ENCODE measurements at regions of chr20 and their contacts with region 1.

Region 1: GRCh38 chr20:57654363-57654997 is 34.3 kb upstream of the ZBP1 start:
- DNase-seq: peak; percentile 56
- H3K4me3 Mint-ChIP-seq: no peak overlapping the region
- H3K27ac Mint-ChIP-seq: no peak overlapping the region
- H3K4me1 Mint-ChIP-seq: peaks cover 13% of the 10 kb centered on the region
- H3K27me3 Mint-ChIP-seq: no peaks in the 10 kb centered on the region
- CTCF ChIP-seq: peak; percentile 88

Region 2: GRCh38 chr20:56664791-56665190 is 989.7 kb before region 1 on chr20:
- CTCF ChIA-PET with region 1: no interaction called
- POLR2A ChIA-PET with region 1: no interaction called
- intact Hi-C with region 1: no loop called
- DNase-seq: no peak
- H3K4me3 Mint-ChIP-seq: no peak overlapping the region
- H3K27ac Mint-ChIP-seq: no peak overlapping the region
- H3K4me1 Mint-ChIP-seq: no peaks in the 10 kb centered on the region
- H3K27me3 Mint-ChIP-seq: no peaks in the 10 kb centered on the region
- CTCF ChIP-seq: no peak

Region 3: GRCh38 chr20:57638173-57638894 is 16.1 kb before region 1 on chr20:
- CTCF ChIA-PET with region 1: interaction called, 13 read pairs
- POLR2A ChIA-PET with region 1: no interaction called
- intact Hi-C with region 1: no loop called
- DNase-seq: no peak
- H3K4me3 Mint-ChIP-seq: no peak overlapping the region
- H3K27ac Mint-ChIP-seq: no peak overlapping the region
- H3K4me1 Mint-ChIP-seq: no peaks in the 10 kb centered on the region
- H3K27me3 Mint-ChIP-seq: peaks cover 90% of the 10 kb centered on the region
- CTCF ChIP-seq: no peak

Region 4: GRCh38 chr20:57772276-57773030 is 118.0 kb after region 1 on chr20:
- CTCF ChIA-PET with region 1: interaction called, 12 read pairs
- POLR2A ChIA-PET with region 1: no interaction called
- intact Hi-C with region 1: no loop called
- DNase-seq: peak; percentile 92
- H3K4me3 Mint-ChIP-seq: no peak overlapping the region
- H3K27ac Mint-ChIP-seq: no peak overlapping the region
- H3K4me1 Mint-ChIP-seq: peaks cover 24% of the 10 kb centered on the region
- H3K27me3 Mint-ChIP-seq: no peaks in the 10 kb centered on the region
- CTCF ChIP-seq: no peak

Region 5: GRCh38 chr20:58017237-58017969 is 362.9 kb after region 1 on chr20:
- CTCF ChIA-PET with region 1: no interaction called
- POLR2A ChIA-PET with region 1: no interaction called
- intact Hi-C with region 1: no loop called
- DNase-seq: peak; percentile 37
- H3K4me3 Mint-ChIP-seq: no peak overlapping the region
- H3K27ac Mint-ChIP-seq: no peak overlapping the region
- H3K4me1 Mint-ChIP-seq: peaks cover 21% of the 10 kb centered on the region
- H3K27me3 Mint-ChIP-seq: no peaks in the 10 kb centered on the region
- CTCF ChIP-seq: no peak

Region 6: DNA sequence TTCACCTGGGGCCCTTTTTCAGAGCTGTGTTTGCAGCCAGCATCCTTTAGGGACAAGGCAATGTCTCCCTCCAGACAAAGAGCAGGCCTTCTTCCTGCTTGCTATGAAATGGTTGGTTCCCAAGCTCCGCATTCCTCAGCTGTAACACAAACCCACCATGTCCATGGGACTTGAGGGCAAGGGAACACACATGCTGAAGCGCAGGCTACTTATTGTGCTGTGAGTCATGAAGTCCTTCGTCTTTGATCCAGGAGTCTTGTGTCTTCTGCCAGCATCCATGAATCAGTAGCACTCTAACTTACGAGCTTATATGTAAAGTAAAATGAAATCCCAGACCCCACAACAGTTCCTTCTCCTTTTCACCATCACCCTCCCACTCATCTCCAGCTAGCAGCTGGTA is 515.0 kb after region 1 on chr20:
- CTCF ChIA-PET with region 1: interaction called, 10 read pairs
- POLR2A ChIA-PET with region 1: no interaction called
- intact Hi-C with region 1: no loop called
- DNase-seq: no peak
- H3K4me3 Mint-ChIP-seq: no peak overlapping the region
- H3K27ac Mint-ChIP-seq: no peak overlapping the region
- H3K4me1 Mint-ChIP-seq: no peaks in the 10 kb centered on the region
- H3K27me3 Mint-ChIP-seq: peaks cover 11% of the 10 kb centered on the region
- CTCF ChIP-seq: no peak

Region 7: GRCh38 chr20:58209652-58210397 is 555.3 kb after region 1 on chr20:
- CTCF ChIA-PET with region 1: interaction called, 15 read pairs
- POLR2A ChIA-PET with region 1: no interaction called
- intact Hi-C with region 1: no loop called
- DNase-seq: peak; percentile 65
- H3K4me3 Mint-ChIP-seq: no peak overlapping the region
- H3K27ac Mint-ChIP-seq: peak overlapping the region; percentile 76
- H3K4me1 Mint-ChIP-seq: no peaks in the 10 kb centered on the region
- H3K27me3 Mint-ChIP-seq: peaks cover 51% of the 10 kb centered on the region
- CTCF ChIP-seq: peak; percentile 100